ENCODE measurements at regions of chr17 and their contacts with region 1.

Region 1: GRCh38 chr17:1186923-1187771 is 7.4 kb upstream of the ABR start:
- DNase-seq: peak; percentile 85
- CTCF ChIP-seq: peak; percentile 96

Region 2: GRCh38 chr17:1147661-1148060 is 39.5 kb before region 1 on chr17:
- CTCF ChIA-PET with region 1: interaction called, 10 read pairs
- POLR2A ChIA-PET with region 1: no interaction called
- DNase-seq: no peak
- CTCF ChIP-seq: no peak

Region 3: GRCh38 chr17:1164935-1165556 is 22.1 kb before region 1 on chr17:
- CTCF ChIA-PET with region 1: interaction called, 27 read pairs
- POLR2A ChIA-PET with region 1: no interaction called
- DNase-seq: peak; percentile 62
- CTCF ChIP-seq: peak; percentile 14

Region 4: DNA sequence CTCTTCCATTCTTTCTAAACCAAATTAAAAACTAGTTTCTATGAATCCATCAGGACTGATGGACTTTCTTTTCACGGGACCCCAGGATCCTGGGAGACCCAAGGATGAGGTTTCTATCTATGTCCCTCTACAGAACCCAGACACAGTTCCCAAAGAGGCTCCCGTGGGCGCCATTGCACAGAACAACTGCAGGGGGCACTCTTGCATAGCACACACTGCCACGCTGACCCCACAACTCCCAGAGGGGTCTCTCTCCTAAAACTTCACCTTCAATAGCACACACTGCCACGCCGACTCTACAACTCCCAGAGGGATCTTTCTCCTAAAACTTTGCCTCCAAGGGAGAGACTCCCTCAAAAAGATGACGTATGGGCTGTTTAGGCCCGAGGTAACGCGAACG is 16.4 kb before region 1 on chr17:
- CTCF ChIA-PET with region 1: interaction called, 27 read pairs
- POLR2A ChIA-PET with region 1: no interaction called
- DNase-seq: no peak
- CTCF ChIP-seq: peak; percentile 23

Region 5: DNA sequence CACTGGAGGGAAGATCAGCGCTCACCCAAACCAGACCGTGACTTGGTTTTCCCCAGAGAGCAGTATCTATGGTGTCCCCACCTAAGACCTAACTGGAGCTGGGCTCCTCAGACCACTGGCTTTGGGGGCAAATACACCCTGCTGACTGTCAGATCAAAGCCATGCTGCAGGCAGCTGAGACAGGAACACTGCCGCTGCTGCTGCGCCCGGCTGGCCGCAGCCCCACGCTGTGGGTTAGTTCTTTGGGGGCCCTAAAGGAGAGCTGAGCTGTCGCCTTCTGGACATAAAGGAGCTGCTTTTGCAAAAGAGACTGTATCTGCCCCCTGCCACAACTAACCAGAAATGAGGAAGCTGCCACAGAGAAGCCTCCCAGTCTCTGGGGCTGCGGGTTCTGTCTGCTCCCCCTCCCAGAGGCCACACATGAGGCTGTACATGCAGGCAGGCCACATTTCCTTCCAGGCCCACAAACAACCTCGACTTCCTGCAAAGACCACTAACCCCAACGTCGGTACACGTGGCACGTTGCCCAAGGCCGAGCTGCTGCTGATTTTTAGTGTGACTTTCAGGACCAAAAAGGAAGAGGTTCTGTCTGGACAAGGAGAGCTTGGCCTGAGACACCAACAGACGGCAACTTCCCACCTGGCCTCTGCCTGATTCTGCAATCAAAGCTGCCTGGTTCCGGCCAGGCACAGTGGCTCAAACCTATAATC is 10.8 kb after region 1 on chr17:
- CTCF ChIA-PET with region 1: interaction called, 110 read pairs
- POLR2A ChIA-PET with region 1: interaction called, 9 read pairs
- DNase-seq: peak; percentile 85
- CTCF ChIP-seq: no peak

Region 6: GRCh38 chr17:1251866-1252608 is 64.9 kb after region 1 on chr17:
- CTCF ChIA-PET with region 1: no interaction called
- POLR2A ChIA-PET with region 1: no interaction called
- DNase-seq: no peak
- CTCF ChIP-seq: no peak

Measured in GM10248 (cell line).